Caco-2 (cell line): ENCODE measurements at regions of chr22 and their contacts with region 1.

Region 1: DNA sequence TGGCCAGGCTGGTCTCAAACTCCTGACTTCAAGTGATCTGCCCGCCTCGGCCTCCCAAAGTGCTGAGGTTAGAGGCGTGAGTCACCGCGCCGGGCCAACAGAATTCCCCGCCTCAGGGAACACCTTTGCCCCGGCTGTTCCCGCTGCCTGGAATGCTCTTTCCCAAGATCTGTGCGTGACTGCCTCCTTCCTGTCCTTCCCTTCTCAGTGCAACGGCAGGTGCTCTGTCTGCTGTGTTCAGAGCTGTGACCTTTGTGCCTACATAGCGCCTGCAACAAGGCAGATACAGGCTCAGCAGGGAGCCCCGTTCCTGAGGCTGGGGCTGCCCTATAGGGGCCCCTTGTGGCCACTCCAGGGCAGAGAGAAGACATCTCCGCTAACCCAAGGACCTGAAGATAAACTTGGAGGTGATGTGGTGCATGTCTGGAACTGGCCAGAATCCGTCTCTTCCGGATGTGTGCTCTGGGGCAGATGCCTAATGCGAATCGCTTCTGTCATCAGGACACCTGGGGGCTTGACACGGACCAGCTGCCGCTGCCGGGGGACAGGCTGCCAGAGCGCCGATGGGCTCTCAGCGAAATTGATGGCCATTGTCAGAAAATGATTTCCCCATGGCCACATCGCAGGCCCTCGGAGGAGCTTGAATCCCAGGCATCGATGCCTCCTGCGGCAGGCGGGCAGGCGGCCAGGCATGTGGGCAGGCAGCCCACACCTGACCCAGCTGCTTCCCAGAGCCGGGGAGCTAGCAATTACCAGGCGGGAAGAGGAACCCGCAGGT is 43.5 kb upstream of the TCF20 start:
- DNase-seq: peak; percentile 94 to 98
- H3K4me3 ChIP-seq: no peak overlapping the region
- H3K4me3 Mint-ChIP-seq: peak overlapping the region; percentile 52
- H3K27ac Mint-ChIP-seq: peak overlapping the region; percentile 95
- H3K4me1 ChIP-seq: peaks cover 61% of the 10 kb centered on the region
- H3K4me1 Mint-ChIP-seq: peaks cover 42% of the 10 kb centered on the region
- H3K27me3 ChIP-seq: no peaks in the 10 kb centered on the region
- H3K27me3 Mint-ChIP-seq: no peaks in the 10 kb centered on the region
- CTCF ChIP-seq: peak; percentile 67 to 91

Region 2: GRCh38 chr22:42114721-42115120 is 199.3 kb before region 1 on chr22:
- CTCF ChIA-PET with region 1: no interaction called
- POLR2A ChIA-PET with region 1: no interaction called
- intact Hi-C with region 1: no loop called
- DNase-seq: peak in 1 of 2 experiments; percentile 47
- H3K4me3 ChIP-seq: no peak overlapping the region
- H3K4me3 Mint-ChIP-seq: no peak overlapping the region
- H3K27ac Mint-ChIP-seq: no peak overlapping the region
- H3K4me1 ChIP-seq: no peaks in the 10 kb centered on the region
- H3K4me1 Mint-ChIP-seq: no peaks in the 10 kb centered on the region
- H3K27me3 ChIP-seq: no peaks in the 10 kb centered on the region
- H3K27me3 Mint-ChIP-seq: no peaks in the 10 kb centered on the region
- CTCF ChIP-seq: peak; percentile 34 to 35

Region 3: GRCh38 chr22:42169055-42169469 is 144.9 kb before region 1 on chr22:
- CTCF ChIA-PET with region 1: no interaction called
- POLR2A ChIA-PET with region 1: no interaction called
- intact Hi-C with region 1: loop called (anchors 1 kb)
- DNase-seq: peak; percentile 77 to 82
- H3K4me3 ChIP-seq: no peak overlapping the region
- H3K4me3 Mint-ChIP-seq: no peak overlapping the region
- H3K27ac Mint-ChIP-seq: no peak overlapping the region
- H3K4me1 ChIP-seq: no peaks in the 10 kb centered on the region
- H3K4me1 Mint-ChIP-seq: no peaks in the 10 kb centered on the region
- H3K27me3 ChIP-seq: no peaks in the 10 kb centered on the region
- H3K27me3 Mint-ChIP-seq: no peaks in the 10 kb centered on the region
- CTCF ChIP-seq: peak; percentile 97 to 99

Region 4: DNA sequence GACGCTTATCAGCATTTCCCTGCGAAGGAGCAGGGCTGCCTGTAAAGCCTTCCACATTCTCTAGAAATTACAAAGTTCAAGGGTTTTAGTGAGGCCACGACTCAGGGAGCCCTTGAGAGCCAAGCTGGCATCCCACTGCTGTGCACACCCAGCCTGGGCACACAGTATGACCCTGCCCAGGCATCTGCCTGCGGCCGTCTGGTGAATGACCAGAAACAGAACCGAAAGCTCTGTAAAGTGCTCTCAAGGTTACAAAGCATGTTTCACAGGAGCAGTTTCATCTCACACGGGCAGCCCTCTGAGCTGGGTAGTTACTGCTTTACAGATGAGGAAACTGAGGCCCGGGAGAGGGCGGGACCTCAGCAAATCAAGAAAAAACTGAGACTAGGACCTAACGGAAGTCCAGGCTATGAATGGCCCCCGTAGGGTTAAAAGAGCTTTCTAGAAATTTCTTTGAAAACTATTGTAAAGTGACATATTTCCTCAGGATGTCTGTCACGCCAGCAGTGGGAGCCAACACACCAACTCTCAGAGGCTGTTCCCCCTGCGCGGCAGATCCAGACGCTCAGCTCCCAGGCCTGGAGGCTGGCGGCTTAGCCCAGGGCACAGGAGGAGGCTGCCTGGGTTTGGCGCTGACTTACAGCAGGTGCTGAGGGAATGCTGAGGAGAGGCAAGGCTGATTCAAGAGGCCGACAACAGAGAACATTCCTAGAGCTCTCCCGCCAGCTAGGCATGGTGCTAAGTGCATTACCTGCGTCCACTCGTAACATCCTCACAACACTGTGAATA is 35.8 kb before region 1 on chr22:
- CTCF ChIA-PET with region 1: interaction called, 10 read pairs
- POLR2A ChIA-PET with region 1: no interaction called
- intact Hi-C with region 1: loop called (anchors 1 kb)
- DNase-seq: peak; percentile 75 to 78
- H3K4me3 ChIP-seq: no peak overlapping the region
- H3K4me3 Mint-ChIP-seq: no peak overlapping the region
- H3K27ac Mint-ChIP-seq: peak overlapping the region; percentile 55
- H3K4me1 ChIP-seq: peaks cover 52% of the 10 kb centered on the region
- H3K4me1 Mint-ChIP-seq: peaks cover 38% of the 10 kb centered on the region
- H3K27me3 ChIP-seq: no peaks in the 10 kb centered on the region
- H3K27me3 Mint-ChIP-seq: no peaks in the 10 kb centered on the region
- CTCF ChIP-seq: peak in 1 of 2 experiments; percentile 62

Region 5: GRCh38 chr22:42283278-42284201 is 30.5 kb before region 1 on chr22:
- CTCF ChIA-PET with region 1: interaction called, 10 read pairs
- POLR2A ChIA-PET with region 1: no interaction called
- intact Hi-C with region 1: loop called (anchors 1 kb)
- DNase-seq: peak; percentile 86 to 88
- H3K4me3 ChIP-seq: peak overlapping the region; percentile 41
- H3K4me3 Mint-ChIP-seq: peak overlapping the region; percentile 42
- H3K27ac Mint-ChIP-seq: peak overlapping the region; percentile 22
- H3K4me1 ChIP-seq: peaks cover 78% of the 10 kb centered on the region
- H3K4me1 Mint-ChIP-seq: peaks cover 31% of the 10 kb centered on the region
- H3K27me3 ChIP-seq: no peaks in the 10 kb centered on the region
- H3K27me3 Mint-ChIP-seq: no peaks in the 10 kb centered on the region
- CTCF ChIP-seq: no peak

Region 6: DNA sequence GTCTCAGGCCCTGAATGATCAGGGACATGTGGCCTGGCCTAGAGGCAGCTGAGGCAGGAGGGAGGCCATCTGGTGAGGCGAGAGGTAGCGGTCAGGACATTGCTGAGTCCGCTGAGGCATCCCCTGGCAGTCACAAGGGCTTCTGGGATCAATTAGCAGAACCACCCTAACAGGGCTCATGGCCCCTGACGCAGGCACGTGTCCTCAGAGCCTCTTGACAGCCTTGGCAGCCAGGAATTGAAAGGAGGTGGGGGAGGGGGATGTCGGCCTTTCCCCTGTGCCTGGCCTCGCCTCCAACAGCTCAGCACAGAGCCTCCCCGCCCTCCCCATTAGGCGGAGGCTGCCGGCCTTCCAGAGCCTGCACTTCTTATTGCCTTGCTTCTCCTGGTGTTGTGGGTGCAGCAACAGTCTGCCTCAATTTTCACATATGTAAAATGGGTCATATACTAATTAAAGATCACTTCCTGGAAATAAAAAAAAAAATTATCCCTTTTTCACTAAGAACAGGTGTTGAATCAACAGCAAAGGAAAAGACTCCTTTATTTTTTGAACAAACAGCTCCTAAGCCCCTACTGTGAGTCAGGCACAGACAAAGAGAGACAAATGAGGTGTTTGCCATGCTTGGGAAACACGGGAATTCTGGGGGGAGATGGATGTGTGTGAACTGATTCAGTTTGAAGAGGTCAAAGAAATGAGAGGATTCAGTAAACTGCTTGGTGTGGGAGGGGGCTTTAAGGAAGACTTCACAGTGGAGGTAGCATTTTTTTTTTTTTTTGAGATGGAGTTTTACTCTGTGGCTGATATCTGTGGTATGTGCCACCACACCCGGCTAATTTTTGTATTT is 62.9 kb after region 1 on chr22:
- CTCF ChIA-PET with region 1: no interaction called
- POLR2A ChIA-PET with region 1: no interaction called
- intact Hi-C with region 1: no loop called
- DNase-seq: peak; percentile 32 to 53
- H3K4me3 ChIP-seq: no peak overlapping the region
- H3K4me3 Mint-ChIP-seq: no peak overlapping the region
- H3K27ac Mint-ChIP-seq: peak overlapping the region; percentile 17
- H3K4me1 ChIP-seq: peaks cover 5% of the 10 kb centered on the region; the same call in 1 of the 2 replicates
- H3K4me1 Mint-ChIP-seq: peaks cover 22% of the 10 kb centered on the region
- H3K27me3 ChIP-seq: no peaks in the 10 kb centered on the region
- H3K27me3 Mint-ChIP-seq: no peaks in the 10 kb centered on the region
- CTCF ChIP-seq: no peak